GM10248 (cell line): ENCODE measurements at regions of chr19 and their contacts with region 1.

Region 1: DNA sequence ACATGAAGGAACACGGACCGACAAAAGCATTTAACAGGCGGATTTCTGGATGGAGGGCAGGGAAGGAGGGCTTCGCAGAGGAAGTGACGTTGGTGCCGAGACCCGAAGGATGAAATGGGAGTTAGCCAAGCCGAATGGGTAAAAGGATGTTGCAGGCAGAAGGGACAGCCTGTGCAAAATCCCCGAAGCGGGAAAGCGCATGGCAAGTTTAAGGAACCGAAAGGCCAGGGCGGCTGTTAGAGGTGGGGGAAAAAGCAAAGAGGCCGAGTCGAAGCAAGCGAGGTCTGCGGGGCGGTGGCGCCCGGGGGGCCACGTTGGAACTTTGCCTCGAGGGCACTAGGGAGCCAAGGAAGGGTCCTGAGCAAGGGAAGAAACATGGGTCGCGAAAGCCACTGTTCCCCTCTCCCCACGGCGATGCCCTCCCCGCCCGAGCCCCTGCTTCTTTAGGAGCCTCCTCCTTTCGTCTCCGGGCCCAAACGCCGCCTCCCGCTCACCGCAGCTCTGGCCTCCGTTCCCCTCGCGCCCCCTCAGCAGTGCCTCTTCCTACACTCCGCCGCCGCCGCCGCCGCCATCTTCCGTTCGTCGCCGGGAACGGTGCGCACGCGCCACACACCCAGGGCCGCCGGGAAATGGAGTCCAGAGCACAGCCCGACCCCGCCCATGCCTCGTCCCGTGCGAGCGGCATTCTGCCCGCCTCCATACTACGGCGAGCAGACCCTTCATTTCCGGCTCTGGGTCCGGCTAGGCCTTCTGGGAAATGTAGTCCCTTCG is at the start of gene SYMPK:
- DNase-seq: peak; percentile 100
- CTCF ChIP-seq: no peak

Region 2: DNA sequence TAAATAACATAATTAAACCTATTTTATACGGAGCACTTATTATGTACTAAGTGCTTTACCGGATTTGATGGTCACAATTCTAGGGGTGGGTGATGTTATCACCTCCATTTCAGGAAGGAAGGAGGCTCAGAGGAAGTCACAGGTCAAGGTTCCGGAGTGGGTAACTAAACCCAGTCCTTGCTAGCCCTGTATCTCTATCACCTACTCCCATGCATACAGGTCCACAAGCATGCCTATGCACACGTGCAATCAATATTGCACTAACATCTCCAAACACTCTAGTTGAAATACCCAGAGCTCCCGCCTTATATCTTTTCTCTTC is 412.8 kb before region 1 on chr19:
- CTCF ChIA-PET with region 1: no interaction called
- POLR2A ChIA-PET with region 1: interaction called, 10 read pairs
- DNase-seq: no peak
- CTCF ChIP-seq: no peak

Region 3: GRCh38 chr19:45842198-45842597 is 20.6 kb before region 1 on chr19:
- CTCF ChIA-PET with region 1: no interaction called
- POLR2A ChIA-PET with region 1: no interaction called
- DNase-seq: no peak
- CTCF ChIP-seq: no peak

Region 4: DNA sequence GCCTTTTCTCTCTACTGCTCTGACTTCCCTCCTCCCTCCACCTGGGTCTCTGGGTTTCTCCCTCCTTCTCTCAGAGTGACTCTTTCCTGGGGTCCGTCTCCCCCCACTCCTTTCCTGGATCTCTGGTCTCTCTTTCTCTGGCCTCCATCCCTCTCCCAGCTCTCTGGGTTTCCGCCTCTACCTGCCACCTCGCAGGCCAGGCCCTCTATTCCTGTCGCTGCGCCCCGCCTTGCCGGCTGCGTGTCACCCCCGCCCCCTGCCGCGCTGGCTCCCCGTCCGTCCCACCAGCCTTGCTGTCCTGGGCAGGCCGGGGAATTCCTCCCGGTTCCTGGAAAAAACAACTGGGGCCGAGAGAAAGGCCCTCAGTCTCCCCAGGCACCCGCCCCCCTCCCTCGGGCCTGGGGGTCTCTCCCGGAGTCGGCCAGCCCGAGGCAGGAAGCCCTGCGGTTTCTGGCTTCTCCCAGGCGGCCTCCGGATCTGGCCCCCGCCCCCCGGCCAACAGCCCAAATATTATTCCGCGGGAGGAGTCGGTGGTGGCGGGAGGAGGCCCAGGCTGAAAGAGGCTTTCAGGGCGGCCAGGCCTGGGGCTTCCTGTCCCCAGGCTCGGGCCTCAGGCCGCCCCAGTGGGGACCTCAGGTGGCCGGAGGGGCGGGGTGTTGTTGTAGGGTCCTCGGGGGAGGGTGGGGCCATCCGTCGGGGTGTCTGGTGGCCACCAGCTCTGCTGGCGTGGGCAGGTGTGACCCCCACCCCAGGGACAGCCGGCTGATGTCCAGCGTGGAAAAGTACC is 13.9 kb after region 1 on chr19:
- CTCF ChIA-PET with region 1: interaction called, 152 read pairs
- POLR2A ChIA-PET with region 1: interaction called, 14 read pairs
- DNase-seq: peak; percentile 75
- CTCF ChIP-seq: no peak

Region 5: GRCh38 chr19:45886427-45887199 is 23.9 kb after region 1 on chr19:
- CTCF ChIA-PET with region 1: interaction called, 152 read pairs
- POLR2A ChIA-PET with region 1: interaction called, 19 read pairs
- DNase-seq: peak; percentile 90
- CTCF ChIP-seq: no peak